PC-9 (cell line): ENCODE measurements at regions of chr2 and their contacts with region 1.

Region 1: DNA sequence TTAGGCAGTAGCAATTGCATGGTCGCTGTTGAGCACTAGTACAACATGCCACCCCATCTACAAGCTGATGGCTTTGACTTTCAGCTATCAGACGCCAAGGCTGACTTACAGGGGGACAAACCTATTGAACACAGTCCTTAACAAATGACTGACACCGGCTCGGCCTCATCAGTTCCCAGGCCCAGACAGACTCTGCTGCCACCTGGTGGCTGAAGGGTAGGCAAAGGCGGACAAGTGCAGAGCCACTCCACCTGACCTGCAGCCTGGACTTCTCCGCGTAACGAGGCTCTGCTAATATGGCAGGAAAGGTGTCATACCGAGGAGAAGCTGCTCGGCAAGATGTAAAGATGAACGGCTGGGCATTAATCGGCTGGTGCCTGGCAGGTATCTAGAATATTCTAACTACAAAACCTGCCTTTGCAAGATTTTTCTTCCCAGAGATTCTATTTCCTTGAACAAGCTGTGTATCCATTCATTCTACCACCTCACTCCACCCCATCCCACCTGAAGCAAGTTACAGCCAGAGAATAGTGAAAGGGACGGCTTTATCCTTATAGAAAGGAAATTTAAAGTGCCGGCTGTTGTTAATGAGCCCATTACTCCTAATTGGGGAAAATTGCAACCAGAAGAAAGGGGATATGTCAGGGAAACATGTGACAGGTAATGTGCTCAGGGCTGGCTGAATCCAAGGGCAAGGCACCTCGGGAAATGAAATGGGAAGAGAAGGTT is 67.4 kb downstream of the STEAP3 start:
- DNase-seq: peak; percentile 70 to 85
- H3K4me3 ChIP-seq: no peak overlapping the region
- H3K27ac ChIP-seq: no peak overlapping the region
- H3K4me1 ChIP-seq: peaks cover 5% of the 10 kb centered on the region
- H3K27me3 ChIP-seq: no peaks in the 10 kb centered on the region
- CTCF ChIP-seq: peak; percentile 99

Region 2: DNA sequence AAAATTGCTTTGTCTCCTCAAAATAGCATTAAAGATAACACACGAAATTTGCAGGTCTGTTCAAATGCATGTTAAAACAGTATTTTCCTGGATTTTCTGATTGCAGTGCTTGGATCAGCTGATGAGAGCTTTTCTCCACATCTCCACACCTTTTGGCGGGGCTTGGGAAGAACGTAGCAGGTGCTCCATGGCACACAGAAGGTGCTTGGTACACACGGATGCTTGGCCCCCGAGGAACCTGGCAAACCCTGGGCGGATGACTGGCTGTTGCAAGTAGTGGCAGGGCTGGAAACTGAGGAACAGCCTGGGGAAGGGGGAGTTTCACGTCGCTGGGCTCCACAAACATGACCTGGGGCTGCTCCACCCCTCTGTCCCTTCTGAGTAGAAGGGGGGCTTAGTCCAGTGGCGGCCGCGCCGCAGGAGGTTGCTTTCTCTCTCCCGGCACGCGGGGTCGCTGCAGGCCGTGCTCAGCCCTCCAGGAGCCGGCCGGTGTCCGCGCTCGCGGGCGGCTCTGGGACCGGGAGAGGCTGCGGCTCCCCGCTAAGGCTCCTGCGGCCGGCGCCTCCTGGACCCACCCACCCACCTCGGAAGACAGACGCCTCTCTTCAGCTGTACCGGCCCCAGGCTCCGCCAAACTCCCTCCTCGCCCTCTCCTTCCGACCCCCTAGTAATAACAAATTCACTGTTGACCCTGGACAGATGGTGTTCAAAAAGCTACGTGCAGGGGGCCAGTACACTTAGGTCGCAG is 279.7 kb before region 1 on chr2:
- CTCF ChIA-PET with region 1: no interaction called
- POLR2A ChIA-PET with region 1: no interaction called
- intact Hi-C with region 1: loop called (anchors 1 kb)
- DNase-seq: peak in 1 of 2 experiments; percentile 51
- H3K4me3 ChIP-seq: peak overlapping the region; percentile 13; the same call in 1 of the 2 replicates
- H3K27ac ChIP-seq: no peak overlapping the region
- H3K4me1 ChIP-seq: no peaks in the 10 kb centered on the region
- H3K27me3 ChIP-seq: no peaks in the 10 kb centered on the region
- CTCF ChIP-seq: peak; percentile 79

Region 3: GRCh38 chr2:119218478-119219064 is 72.5 kb before region 1 on chr2:
- CTCF ChIA-PET with region 1: no interaction called
- POLR2A ChIA-PET with region 1: no interaction called
- intact Hi-C with region 1: loop called (anchors 2 kb)
- DNase-seq: peak; percentile 46 to 54
- H3K4me3 ChIP-seq: no peak overlapping the region
- H3K27ac ChIP-seq: no peak overlapping the region
- H3K4me1 ChIP-seq: peaks cover 28% of the 10 kb centered on the region
- H3K27me3 ChIP-seq: no peaks in the 10 kb centered on the region
- CTCF ChIP-seq: peak; percentile 69

Region 4: GRCh38 chr2:119350311-119350998 is 59.4 kb after region 1 on chr2:
- CTCF ChIA-PET with region 1: no interaction called
- POLR2A ChIA-PET with region 1: no interaction called
- intact Hi-C with region 1: no loop called
- DNase-seq: no peak
- H3K4me3 ChIP-seq: no peak overlapping the region
- H3K27ac ChIP-seq: no peak overlapping the region
- H3K4me1 ChIP-seq: peaks cover 4% of the 10 kb centered on the region; the same call in 1 of the 2 replicates
- H3K27me3 ChIP-seq: no peaks in the 10 kb centered on the region
- CTCF ChIP-seq: no peak

Region 5: DNA sequence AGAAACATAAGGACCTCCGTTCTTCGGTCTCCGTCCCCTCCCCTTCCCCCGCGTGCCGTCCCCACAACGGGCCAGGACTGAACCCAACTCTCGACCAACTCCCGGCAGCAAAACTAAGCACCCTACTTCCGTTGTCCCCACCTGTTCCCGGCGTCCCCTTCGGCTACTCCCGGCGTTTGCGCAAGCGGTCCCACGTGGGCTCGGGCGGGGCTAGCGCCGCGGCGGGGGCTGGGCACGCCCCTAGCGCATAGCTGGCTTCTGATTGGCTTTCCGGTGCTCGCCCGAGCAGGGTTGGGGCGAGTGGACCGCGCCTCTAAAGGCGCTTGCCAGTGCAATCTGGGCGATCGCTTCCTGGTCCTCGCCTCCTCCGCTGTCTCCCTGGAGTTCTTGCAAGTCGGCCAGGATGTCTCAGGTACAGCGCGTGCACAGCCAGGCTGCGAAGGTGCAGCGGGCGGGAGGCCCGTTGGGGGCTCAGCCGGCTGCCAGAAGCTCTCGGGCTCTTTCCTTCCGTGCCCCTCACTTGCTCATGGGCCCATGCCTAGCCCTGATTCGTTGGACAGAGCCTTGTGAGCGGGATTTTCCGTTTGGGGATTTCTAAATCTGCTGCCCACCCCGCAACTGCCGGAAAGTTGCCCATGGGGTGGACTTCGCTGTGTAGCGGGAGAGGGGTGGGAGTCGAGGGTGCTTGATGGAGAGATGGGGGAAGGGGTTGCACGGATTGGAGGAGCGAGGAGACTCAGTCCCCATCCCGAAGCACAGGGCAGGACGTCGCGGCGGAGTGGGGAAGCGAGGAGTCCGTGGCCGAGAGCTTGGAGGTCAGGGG is 75.8 kb after region 1 on chr2 and contains the starts of genes C2orf76 and DBI:
- CTCF ChIA-PET with region 1: no interaction called
- POLR2A ChIA-PET with region 1: no interaction called
- intact Hi-C with region 1: loop called (anchors 2 kb)
- DNase-seq: peak; percentile 97 to 98
- H3K4me3 ChIP-seq: peak within 1 kb of the TSS; percentile 94
- H3K27ac ChIP-seq: peak within 1 kb of the TSS; percentile 48
- H3K4me1 ChIP-seq: peaks cover 27% of the 10 kb centered on the region
- H3K27me3 ChIP-seq: no peaks in the 10 kb centered on the region
- CTCF ChIP-seq: no peak
- total RNA-seq, gene C2orf76: 11.5 and 12.7 TPM in 2 replicates
- total RNA-seq, gene DBI: 128 and 265 TPM in 2 replicates

Region 6: DNA sequence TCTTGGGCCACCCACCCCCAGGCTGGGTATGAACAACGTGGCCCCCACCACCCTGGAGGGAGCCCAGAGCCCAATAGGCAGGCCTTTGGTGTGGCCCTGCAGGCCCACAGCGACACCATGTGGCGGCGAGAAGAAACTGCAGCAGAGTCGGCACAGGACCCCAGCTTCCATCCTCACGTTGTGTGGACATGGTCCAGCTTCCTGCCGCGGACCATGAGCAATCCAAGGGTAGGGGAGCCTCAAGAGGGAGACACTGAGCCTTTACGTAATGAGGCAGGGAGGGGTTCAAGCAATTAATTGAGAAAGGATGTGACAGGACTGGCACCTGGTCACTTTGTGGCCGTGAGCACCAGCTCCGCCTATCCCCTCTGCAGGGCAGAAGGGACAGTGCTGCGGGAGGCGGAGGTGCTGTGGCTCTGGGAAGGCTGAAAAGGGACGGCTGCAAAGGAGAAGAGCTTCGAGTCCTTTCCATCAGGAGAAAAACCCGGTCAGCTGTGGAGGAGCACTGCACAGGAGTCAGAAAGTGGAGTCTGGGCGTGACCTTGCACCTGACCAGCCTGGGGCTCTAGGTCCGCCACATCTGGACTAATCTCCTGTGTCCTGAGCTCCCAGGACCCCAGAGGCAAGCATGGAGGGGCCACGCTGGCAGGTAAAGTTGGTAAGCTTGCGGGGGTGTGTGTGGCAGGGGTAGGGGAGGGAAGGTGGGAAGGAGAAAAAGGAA is 185.4 kb after region 1 on chr2:
- CTCF ChIA-PET with region 1: no interaction called
- POLR2A ChIA-PET with region 1: no interaction called
- intact Hi-C with region 1: loop called (anchors 5 kb)
- DNase-seq: peak; percentile 49 to 61
- H3K4me3 ChIP-seq: no peak overlapping the region
- H3K27ac ChIP-seq: no peak overlapping the region
- H3K4me1 ChIP-seq: no peaks in the 10 kb centered on the region
- H3K27me3 ChIP-seq: no peaks in the 10 kb centered on the region
- CTCF ChIP-seq: peak; percentile 100

Region 7: GRCh38 chr2:120005834-120006521 is 715.0 kb after region 1 on chr2:
- CTCF ChIA-PET with region 1: no interaction called
- POLR2A ChIA-PET with region 1: no interaction called
- intact Hi-C with region 1: no loop called
- DNase-seq: peak in 1 of 2 experiments; percentile 70
- H3K4me3 ChIP-seq: no peak overlapping the region
- H3K27ac ChIP-seq: no peak overlapping the region
- H3K4me1 ChIP-seq: no peaks in the 10 kb centered on the region
- H3K27me3 ChIP-seq: no peaks in the 10 kb centered on the region
- CTCF ChIP-seq: no peak